Activated CD4-positive, alpha-beta T cell treated with anti-CD3 and anti-CD28 coated beads, Interleukin-2, amount 10 ng/mL, durations not matched to agents 24 days and 14 days (primary cell): ENCODE measurements at regions of chr5 and their contacts with region 1.

Region 1: DNA sequence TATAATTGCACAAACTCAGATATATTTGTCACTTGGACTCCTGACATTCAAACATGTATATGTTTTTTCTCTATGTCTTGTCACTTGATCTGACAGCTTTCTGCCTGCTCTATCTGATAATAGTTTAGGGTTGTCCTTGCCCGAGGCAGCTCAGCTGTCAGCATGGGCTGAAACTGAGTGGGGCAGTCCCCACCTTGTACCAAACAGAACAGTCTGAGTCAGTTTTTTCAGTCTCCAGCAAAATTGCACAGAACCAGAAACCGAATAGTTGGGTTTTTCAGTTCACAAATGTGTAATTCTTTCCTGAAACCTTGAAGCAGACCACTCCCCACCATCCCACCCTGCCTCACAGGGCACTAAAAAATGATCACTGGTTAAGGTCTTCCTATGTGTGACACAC is 9.5 kb upstream of the HAND1 start:
- DNase-seq: no peak
- H3K4me3 Mint-ChIP-seq: no peak overlapping the region
- H3K27ac Mint-ChIP-seq: no peak overlapping the region
- H3K4me1 Mint-ChIP-seq: peaks cover 5% of the 10 kb centered on the region
- H3K27me3 Mint-ChIP-seq: peaks cover 71% of the 10 kb centered on the region

Region 2: GRCh38 chr5:154467655-154468354 is 19.7 kb before region 1 on chr5:
- intact Hi-C with region 1: loop called (anchors 2 kb)
- DNase-seq: peak; percentile 92
- H3K4me3 Mint-ChIP-seq: no peak overlapping the region
- H3K27ac Mint-ChIP-seq: no peak overlapping the region
- H3K4me1 Mint-ChIP-seq: no peaks in the 10 kb centered on the region
- H3K27me3 Mint-ChIP-seq: peaks cover 58% of the 10 kb centered on the region

Region 3: GRCh38 chr5:154475591-154476353 is 11.8 kb before region 1 on chr5:
- intact Hi-C with region 1: loop called (anchors 1 kb)
- DNase-seq: peak; percentile 62
- H3K4me3 Mint-ChIP-seq: no peak overlapping the region
- H3K27ac Mint-ChIP-seq: peak overlapping the region; percentile 73
- H3K4me1 Mint-ChIP-seq: peaks cover 23% of the 10 kb centered on the region
- H3K27me3 Mint-ChIP-seq: peaks cover 86% of the 10 kb centered on the region

Region 4: GRCh38 chr5:154547551-154547950 is 60.0 kb after region 1 on chr5:
- intact Hi-C with region 1: no loop called
- DNase-seq: no peak
- H3K4me3 Mint-ChIP-seq: no peak overlapping the region
- H3K27ac Mint-ChIP-seq: no peak overlapping the region
- H3K4me1 Mint-ChIP-seq: no peaks in the 10 kb centered on the region
- H3K27me3 Mint-ChIP-seq: peaks cover 9% of the 10 kb centered on the region